SK-N-SH (cell line): ENCODE measurements at regions of chr4 and their contacts with region 1.

Region 1: DNA sequence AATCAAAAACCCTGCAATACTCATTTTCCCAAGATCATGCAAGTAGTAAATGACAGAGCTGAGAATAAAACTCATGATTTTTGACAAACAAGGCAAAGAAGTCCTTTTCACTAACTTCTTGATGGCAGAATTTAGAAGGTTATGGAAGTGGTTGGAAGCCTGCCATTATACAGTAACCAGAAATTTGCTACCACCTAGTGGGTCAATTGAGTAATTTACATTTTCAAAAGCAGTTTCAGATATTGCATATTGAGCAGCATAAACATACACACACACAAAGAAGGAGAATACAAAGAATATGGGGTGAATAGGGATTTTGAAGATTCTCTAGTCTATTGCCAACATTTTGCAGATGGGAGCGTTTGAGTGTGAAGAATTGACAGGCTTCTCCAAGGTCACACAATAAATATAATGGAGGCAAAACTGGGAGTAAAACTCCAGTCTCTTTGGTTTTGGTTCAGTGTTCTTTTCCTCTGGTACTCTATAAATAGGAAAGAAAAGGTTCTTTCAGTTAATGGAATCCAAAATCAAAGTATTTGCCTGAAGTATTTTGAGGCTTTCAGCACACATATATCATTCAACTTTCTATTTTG is 70.2 kb downstream of the GC start:
- DNase-seq: peak; percentile 4
- H3K4me3 ChIP-seq: no peak overlapping the region
- H3K27ac ChIP-seq: no peak overlapping the region
- H3K4me1 ChIP-seq: no peaks in the 10 kb centered on the region
- H3K27me3 ChIP-seq: no peaks in the 10 kb centered on the region
- CTCF ChIP-seq: peak; percentile 71
- EP300 ChIP-seq: no peak
- RAD21 ChIP-seq: peak; percentile 77

Region 2: GRCh38 chr4:70651864-70652506 is 1061.7 kb before region 1 on chr4:
- CTCF ChIA-PET with region 1: interaction called, 10 read pairs
- POLR2A ChIA-PET with region 1: no interaction called
- DNase-seq: peak; percentile 24
- H3K4me3 ChIP-seq: peak overlapping the region; percentile 25 to 40; a peak in 3 of 4 replicates
- H3K27ac ChIP-seq: no peak overlapping the region
- H3K4me1 ChIP-seq: no peaks in the 10 kb centered on the region
- H3K27me3 ChIP-seq: no peaks in the 10 kb centered on the region; the same call in 1 of the 2 replicates
- CTCF ChIP-seq: peak; percentile 76
- EP300 ChIP-seq: no peak
- RAD21 ChIP-seq: peak; percentile 74